ENCODE measurements at regions of chr17 and their contacts with region 1.

Region 1: GRCh38 chr17:35747540-35748017 is 5.5 kb downstream of the GAS2L2 start:
- DNase-seq: peak; percentile 75
- ATAC-seq: peak; percentile 92
- H3K4me3 ChIP-seq: no peak overlapping the region
- H3K27ac ChIP-seq: no peak overlapping the region
- H3K4me1 ChIP-seq: peaks cover 8% of the 10 kb centered on the region; the same call in 1 of the 2 replicates
- H3K27me3 ChIP-seq: peaks cover 41% of the 10 kb centered on the region
- CTCF ChIP-seq: peak; percentile 92
- POLR2A ChIP-seq: peak; percentile 49; the same call in 1 of the 2 replicates
- RAD21 ChIP-seq: peak; percentile 97

Region 2: DNA sequence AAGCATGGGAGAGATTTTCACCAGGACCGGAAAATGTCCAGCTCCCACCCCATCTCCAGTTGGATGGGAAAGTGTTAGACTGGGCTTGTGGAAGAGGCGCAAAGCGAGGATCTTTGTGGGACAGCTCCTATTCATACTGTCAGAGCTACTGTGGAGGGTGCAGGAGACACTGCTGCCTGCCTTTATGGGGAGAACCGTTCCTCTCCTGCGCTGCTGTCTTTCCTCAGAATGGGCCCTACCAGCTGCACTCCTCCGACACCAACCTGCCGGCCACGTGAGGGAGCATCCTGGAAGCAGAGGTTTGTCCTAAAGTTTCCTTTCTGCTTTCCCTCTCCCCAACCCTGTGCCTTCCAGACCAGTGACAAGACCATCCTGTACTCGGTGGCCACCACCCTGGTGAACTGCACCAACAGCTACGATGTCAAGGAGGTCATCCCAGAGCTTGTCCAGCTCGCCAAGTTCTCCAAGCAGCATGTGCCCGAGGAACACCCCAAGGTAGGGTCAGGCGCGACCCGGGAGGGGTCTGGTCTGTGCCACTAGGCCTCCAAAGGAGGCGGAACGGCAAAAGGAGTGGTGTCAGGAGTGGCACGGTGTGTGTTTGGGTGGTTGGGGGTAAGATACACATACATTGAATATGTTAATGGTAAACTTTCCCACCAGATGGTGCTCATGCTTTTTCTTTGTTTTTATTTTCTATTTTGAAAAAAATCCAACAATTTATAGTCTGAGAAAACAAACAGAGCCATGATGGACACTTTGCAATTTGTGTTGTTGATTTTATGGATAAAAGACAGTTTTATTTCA is 576.4 kb before region 1 on chr17:
- CTCF ChIA-PET with region 1: no interaction called
- POLR2A ChIA-PET with region 1: no interaction called
- dilution Hi-C with region 1: no loop called
- in situ Hi-C with region 1: no loop called
- intact Hi-C with region 1: loop called (anchors 1 kb)
- DNase-seq: peak; percentile 15
- ATAC-seq: peak; percentile 49
- H3K4me3 ChIP-seq: no peak overlapping the region
- H3K27ac ChIP-seq: no peak overlapping the region
- H3K4me1 ChIP-seq: peaks cover 4% of the 10 kb centered on the region; the same call in 1 of the 2 replicates
- H3K27me3 ChIP-seq: peaks cover 3% of the 10 kb centered on the region; the same call in 1 of the 2 replicates
- CTCF ChIP-seq: peak; percentile 50
- POLR2A ChIP-seq: no peak
- RAD21 ChIP-seq: peak; percentile 51

Region 3: DNA sequence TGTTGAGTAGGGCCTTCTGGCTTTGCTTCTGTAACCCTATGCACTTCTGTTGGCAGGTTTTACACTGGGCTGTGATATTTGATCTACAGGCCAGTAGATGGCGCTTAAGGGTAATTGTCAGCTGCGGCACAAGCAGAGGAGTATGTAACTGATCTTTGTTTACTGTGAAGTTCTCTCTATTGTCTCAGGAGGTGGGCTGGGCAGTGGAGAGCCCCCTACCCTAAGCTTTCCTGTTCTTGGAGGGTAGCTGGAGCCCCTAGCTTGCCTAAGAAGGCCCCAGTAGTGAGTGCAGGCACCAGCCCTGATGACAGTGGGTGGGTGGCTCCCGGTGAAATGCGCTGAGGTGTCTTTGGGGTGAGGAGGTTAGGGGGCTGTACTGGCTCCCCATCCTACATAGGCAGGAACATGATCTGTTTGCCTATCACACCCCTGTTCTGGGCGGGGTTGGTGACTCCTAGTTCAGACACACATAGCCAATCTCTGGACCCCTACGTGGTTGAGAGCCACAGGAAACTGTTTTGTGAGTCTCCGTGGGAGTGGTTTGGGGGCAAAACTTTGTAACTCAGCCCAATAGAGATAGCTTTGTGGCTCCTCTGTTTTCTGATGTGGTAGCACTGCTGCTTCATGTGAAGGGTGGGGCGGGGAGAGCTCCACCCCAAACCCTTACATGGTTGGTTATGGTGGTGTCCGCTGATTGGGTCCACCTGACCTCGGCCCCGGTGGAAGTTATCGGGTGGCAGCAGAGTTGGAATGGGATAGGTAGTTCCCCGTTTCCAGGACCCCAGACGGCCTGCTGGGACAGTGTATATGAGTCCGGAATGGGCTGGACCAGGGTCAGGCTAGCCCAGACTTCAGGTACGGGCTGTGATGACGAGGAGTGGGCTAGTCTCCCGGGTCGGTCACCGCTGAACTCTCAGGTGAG is 434.5 kb before region 1 on chr17:
- CTCF ChIA-PET with region 1: no interaction called
- POLR2A ChIA-PET with region 1: no interaction called
- dilution Hi-C with region 1: no loop called
- in situ Hi-C with region 1: no loop called
- intact Hi-C with region 1: loop called (anchors 2 kb)
- DNase-seq: peak; percentile 73
- ATAC-seq: peak; percentile 94
- H3K4me3 ChIP-seq: no peak overlapping the region
- H3K27ac ChIP-seq: no peak overlapping the region
- H3K4me1 ChIP-seq: peaks cover 3% of the 10 kb centered on the region; the same call in 1 of the 2 replicates
- H3K27me3 ChIP-seq: no peaks in the 10 kb centered on the region
- CTCF ChIP-seq: peak; percentile 80
- POLR2A ChIP-seq: no peak
- RAD21 ChIP-seq: peak; percentile 81

Region 4: GRCh38 chr17:35432176-35433074 is 315.2 kb before region 1 on chr17 and contains the start of gene SLFN12:
- CTCF ChIA-PET with region 1: no interaction called
- POLR2A ChIA-PET with region 1: no interaction called
- dilution Hi-C with region 1: no loop called
- in situ Hi-C with region 1: no loop called
- intact Hi-C with region 1: loop called (anchors 10 kb)
- DNase-seq: peak; percentile 98
- ATAC-seq: peak; percentile 78
- H3K4me3 ChIP-seq: peak within 1 kb of the TSS; percentile 59
- H3K27ac ChIP-seq: peak within 1 kb of the TSS; percentile 92
- H3K4me1 ChIP-seq: peaks cover 1% of the 10 kb centered on the region; the same call in 1 of the 2 replicates
- H3K27me3 ChIP-seq: no peaks in the 10 kb centered on the region
- CTCF ChIP-seq: no peak
- POLR2A ChIP-seq: peak; percentile 83; the same call in 1 of the 2 replicates
- RAD21 ChIP-seq: no peak
- total RNA-seq, gene SLFN12: 38.9 and 48.6 TPM in 2 replicates

Region 5: GRCh38 chr17:35607239-35607847 is 140.2 kb before region 1 on chr17:
- CTCF ChIA-PET with region 1: interaction called, 11 read pairs
- POLR2A ChIA-PET with region 1: no interaction called
- dilution Hi-C with region 1: no loop called
- in situ Hi-C with region 1: no loop called
- intact Hi-C with region 1: no loop called
- DNase-seq: peak; percentile 43
- ATAC-seq: peak; percentile 86
- H3K4me3 ChIP-seq: no peak overlapping the region
- H3K27ac ChIP-seq: peak overlapping the region; percentile 82; the same call in 1 of the 2 replicates
- H3K4me1 ChIP-seq: peaks cover 10% of the 10 kb centered on the region
- H3K27me3 ChIP-seq: no peaks in the 10 kb centered on the region
- CTCF ChIP-seq: no peak
- POLR2A ChIP-seq: no peak
- RAD21 ChIP-seq: no peak